ENCODE measurements at regions of chrX and their contacts with region 1.

Region 1: DNA sequence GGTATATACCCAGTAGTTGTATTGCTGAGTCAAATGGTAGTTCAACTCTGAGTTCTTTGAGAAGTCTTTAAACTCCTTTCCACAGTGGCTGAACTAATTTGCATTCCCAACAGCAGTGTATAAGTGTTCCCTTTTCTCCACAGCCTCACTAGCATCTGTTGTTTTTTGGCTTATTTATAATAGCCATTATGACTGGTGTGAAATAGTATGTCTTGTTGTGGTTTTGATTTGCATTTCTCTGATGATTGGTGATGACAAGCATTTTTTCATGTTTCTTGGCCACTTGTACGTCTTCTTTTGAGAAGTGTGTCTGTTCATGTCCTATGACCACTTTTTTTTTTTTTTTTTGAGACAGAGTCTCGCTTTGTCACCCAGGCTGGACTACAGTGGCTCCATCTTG is 30.5 kb downstream of the GPR50 start:
- DNase-seq: no peak

Region 2: GRCh38 chrX:150324035-150324728 is 882.7 kb before region 1 on chrX:
- intact Hi-C with region 1: loop called in 1 of 2 experiments (anchors 10 kb)
- DNase-seq: no peak